ENCODE measurements at regions of chr19 and their contacts with region 1.

Region 1: GRCh38 chr19:45692187-45693105 is at the start of gene QPCTL:
- DNase-seq: peak; percentile 97
- H3K27ac ChIP-seq: peak within 1 kb of the TSS; percentile 89
- CTCF ChIP-seq: no peak

Region 2: DNA sequence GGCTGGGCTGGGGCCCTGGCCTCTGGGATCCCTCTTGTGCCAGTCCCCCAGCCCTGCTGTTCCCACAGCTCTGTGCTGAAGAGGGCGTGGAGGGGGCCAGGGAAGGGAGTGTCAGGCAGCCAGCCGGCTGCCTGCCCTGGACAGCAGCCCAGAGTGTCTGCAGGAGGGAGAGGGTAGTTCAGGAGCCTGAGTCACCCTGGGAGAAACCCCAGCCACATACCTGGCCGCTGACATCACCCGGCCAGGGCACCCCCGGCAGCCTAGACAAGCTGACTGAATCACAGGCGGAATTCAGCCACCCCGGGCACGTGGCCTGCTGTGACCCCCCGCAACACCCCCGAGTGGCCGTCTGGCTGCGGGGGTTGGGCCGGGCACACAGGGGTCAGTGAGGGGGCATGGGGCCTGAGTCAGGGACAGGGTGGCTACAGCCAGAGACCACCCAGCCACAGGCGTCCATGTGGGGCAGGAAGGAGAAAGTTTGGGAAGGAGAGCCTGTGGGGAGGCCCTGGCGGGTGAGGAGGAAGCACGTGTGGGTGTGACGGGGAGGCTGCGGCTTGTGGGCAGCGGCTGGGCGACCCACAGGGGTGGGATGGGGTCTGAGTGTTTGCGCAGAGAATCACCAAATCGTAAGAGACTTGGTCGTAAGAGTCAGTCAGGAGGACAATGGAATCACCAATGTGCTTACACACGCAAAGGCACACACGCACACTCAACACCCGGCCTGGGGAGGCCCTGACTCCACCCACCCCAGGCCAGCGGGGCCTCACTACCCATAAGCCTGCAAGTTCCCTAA is 236.5 kb before region 1 on chr19:
- CTCF ChIA-PET with region 1: no interaction called
- POLR2A ChIA-PET with region 1: no interaction called
- DNase-seq: peak; percentile 97
- H3K27ac ChIP-seq: peak overlapping the region; percentile 100
- CTCF ChIP-seq: no peak

Region 3: DNA sequence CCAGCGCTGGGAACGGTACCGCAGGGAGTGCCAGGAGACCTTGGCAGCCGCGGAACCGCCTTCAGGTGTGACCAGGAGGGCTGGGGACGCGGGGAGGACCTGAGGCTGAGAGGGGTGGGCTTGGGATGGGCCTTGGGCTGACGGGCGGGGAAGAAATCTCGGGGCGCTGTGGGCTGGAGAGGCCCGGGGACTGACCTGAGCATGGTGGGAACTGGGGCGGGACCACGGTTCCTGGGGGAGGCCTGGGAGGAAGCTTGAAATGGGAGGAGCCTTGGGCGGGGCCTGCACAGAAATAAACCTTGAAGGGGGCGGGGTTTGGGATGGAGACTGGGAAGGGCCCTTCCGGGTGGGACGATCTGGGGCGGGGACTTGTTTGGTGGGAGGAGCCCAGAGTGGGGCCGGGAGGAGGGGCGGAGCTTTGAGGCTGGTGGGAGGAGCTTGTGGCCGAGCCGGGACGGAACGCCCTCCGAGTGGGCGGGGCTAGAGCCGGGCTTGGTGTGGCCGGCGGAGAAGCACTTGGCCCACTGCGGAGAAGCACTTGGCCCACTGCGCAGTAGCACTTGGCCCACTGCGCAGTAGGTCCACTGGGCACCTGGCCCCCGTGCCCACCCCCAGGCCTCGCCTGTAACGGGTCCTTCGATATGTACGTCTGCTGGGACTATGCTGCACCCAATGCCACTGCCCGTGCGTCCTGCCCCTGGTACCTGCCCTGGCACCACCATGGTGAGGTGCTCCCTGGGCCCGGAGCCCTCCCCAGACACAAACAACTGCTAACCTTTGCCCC is 21.6 kb before region 1 on chr19:
- CTCF ChIA-PET with region 1: no interaction called
- POLR2A ChIA-PET with region 1: no interaction called
- DNase-seq: peak; percentile 93
- H3K27ac ChIP-seq: peak overlapping the region; percentile 15
- CTCF ChIP-seq: no peak

Region 4: GRCh38 chr19:45705710-45706415 is 13.4 kb after region 1 on chr19:
- CTCF ChIA-PET with region 1: interaction called, 13 read pairs
- POLR2A ChIA-PET with region 1: interaction called, 3 read pairs
- DNase-seq: no peak
- H3K27ac ChIP-seq: peak overlapping the region; percentile 42
- CTCF ChIP-seq: no peak

Region 5: DNA sequence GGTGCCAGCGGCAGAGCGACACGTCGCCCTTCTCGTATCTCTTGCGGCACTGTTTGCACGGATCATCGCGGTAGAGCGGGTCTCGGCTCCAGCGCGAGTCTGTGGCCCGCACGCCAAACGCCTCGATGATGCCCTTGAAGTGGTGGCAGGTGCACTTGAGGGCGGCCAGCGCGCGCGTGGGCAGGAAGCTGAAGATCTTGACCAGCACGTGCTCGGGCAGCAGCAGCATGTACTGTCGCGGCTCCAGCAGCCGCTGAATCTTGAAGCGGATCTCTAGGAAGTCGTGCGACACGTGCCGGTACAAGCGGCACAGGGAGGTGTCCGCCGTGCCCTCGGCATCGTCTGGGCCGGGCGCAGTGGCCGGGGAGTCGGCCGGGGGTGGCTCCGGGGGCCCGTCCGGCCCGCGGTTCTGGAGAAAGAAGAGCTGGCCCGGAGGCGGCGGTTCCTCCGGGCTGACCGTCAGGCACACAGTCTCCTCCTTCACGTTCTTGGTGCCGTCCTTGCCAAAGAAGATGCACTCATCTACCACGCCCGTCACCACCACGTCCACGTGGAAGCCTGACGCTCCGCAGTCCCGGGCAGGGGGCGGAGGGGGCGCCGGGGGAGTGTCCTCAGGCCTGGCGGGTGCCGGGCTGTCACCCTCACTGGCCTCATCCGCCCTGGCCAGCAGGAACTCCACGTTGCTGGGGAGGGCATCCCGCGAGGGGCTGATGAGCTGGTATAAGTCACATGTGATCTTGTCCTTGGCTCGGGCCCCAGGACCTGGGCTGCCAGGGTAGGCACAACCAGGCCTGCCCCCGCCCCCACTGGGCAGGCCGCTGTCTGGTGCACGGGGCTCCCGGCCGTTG is 19.6 kb after region 1 on chr19:
- CTCF ChIA-PET with region 1: interaction called, 13 read pairs
- POLR2A ChIA-PET with region 1: interaction called, 3 read pairs
- DNase-seq: no peak
- H3K27ac ChIP-seq: 0 out of 2 replicates have a peak overlapping the region, but pooled peaks have one; percentile 20
- CTCF ChIP-seq: no peak

Region 6: GRCh38 chr19:45798995-45799517 is 106.6 kb after region 1 on chr19:
- CTCF ChIA-PET with region 1: no interaction called
- POLR2A ChIA-PET with region 1: no interaction called
- DNase-seq: peak; percentile 79
- H3K27ac ChIP-seq: peak overlapping the region; percentile 61
- CTCF ChIP-seq: peak; percentile 87

Measured in RWPE1 (cell line).